ENCODE measurements at regions of chr5 and their contacts with region 1.

Region 1: GRCh38 chr5:80686757-80687156 is 32.0 kb upstream of the DHFR start:
- H3K4me3 Mint-ChIP-seq: no peak overlapping the region
- H3K27ac Mint-ChIP-seq: no peak overlapping the region
- H3K4me1 Mint-ChIP-seq: peaks cover 6% of the 10 kb centered on the region
- H3K27me3 Mint-ChIP-seq: no peaks in the 10 kb centered on the region

Region 2: GRCh38 chr5:80407735-80408482 is 278.8 kb before region 1 on chr5 and contains the start of gene ZFYVE16:
- intact Hi-C with region 1: no loop called
- H3K4me3 Mint-ChIP-seq: peak within 1 kb of the TSS; percentile 89
- H3K27ac Mint-ChIP-seq: peak within 1 kb of the TSS; percentile 99
- H3K4me1 Mint-ChIP-seq: peaks cover 46% of the 10 kb centered on the region
- H3K27me3 Mint-ChIP-seq: no peaks in the 10 kb centered on the region

Region 3: DNA sequence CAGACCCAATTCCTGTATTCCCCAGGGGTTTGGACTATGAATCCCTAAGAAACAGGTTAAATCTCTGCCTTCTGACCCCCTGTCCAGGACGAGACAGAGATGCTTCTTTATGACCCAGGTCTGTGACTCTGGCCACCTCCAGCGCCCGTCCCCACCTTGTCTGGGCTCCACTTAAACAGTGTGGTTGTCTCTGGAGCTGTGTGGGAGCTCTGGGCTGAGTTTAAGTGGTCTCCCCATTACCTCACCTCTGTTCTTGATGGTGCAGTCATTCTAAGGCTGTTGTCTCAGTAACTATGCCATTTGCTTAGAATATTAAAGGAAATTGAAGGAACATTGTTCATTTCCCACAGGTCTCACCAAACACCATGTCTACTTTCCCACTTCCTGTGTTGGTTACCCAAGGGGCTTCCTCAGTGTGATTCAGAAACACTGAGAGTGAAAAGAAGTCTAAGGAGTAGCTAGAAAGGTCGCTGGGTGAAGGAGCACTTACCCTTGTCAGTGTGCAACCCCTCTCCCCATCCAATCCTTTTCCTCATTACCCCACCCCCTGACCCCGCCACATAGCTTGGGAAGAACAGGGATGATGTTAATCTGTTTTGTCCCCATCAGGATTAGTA is 418.6 kb after region 1 on chr5:
- intact Hi-C with region 1: loop called (anchors 5 kb)
- H3K4me3 Mint-ChIP-seq: no peak overlapping the region
- H3K27ac Mint-ChIP-seq: no peak overlapping the region
- H3K4me1 Mint-ChIP-seq: no peaks in the 10 kb centered on the region
- H3K27me3 Mint-ChIP-seq: peaks cover 4% of the 10 kb centered on the region

Region 4: GRCh38 chr5:81194633-81195333 is 508.0 kb after region 1 on chr5:
- intact Hi-C with region 1: loop called (anchors 2 kb)
- H3K4me3 Mint-ChIP-seq: no peak overlapping the region
- H3K27ac Mint-ChIP-seq: no peak overlapping the region
- H3K4me1 Mint-ChIP-seq: peaks cover 6% of the 10 kb centered on the region
- H3K27me3 Mint-ChIP-seq: peaks cover 22% of the 10 kb centered on the region

Measured in dendritic cell treated with granulocyte-macrophage colony-stimulating factor and Interleukin-4, amounts not matched to agents 40 ng/mL and 50 ng/mL, for 4 days (primary cell).